ENCODE measurements at regions of chr5 and their contacts with region 1.

Region 1: DNA sequence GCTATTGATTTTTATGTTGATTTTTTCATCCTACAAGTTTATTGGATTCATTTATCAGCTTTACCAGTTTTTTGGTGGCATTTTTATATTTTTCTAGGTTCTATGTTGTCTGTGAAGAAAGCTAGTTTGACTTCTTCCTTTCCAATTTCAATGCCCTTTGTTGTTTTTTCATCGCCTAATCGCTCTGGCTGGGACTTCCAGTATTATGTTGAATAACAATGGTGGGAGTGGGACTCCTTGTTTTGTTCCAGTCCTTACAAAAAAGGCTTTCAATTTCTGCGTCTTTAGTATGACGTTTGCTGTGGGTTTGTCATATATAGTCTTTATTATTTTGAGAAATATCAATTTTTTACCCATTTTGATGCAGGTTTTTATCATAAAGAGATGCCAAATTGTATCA is 175.6 kb upstream of the CCNH start:
- DNase-seq: no peak
- H3K4me3 ChIP-seq: no peak overlapping the region
- H3K27ac ChIP-seq: no peak overlapping the region
- H3K4me1 ChIP-seq: no peaks in the 10 kb centered on the region
- H3K27me3 ChIP-seq: no peaks in the 10 kb centered on the region
- CTCF ChIP-seq: no peak

Region 2: DNA sequence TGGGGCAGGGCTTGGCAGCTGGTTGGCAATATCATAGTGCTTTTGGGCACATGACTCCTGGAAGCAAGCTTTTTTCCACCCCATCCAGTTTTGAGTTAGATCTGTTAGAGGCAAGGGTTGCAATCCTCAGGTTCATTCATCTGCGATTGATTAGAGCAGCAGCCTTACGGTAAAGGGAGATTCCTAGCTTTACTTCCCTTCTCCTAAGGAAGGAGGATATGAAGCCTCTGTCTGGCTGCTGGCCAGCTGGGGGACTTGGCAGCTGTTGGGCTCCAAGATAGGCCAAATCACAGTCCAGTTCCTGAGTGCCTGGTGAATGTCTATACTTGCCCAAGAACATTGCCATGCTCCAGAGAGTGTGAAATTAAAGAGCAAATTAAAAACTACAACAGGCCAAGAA is 62.2 kb before region 1 on chr5:
- CTCF ChIA-PET with region 1: no interaction called
- POLR2A ChIA-PET with region 1: no interaction called
- intact Hi-C with region 1: loop called (anchors 2 kb)
- DNase-seq: peak in 1 of 2 experiments; percentile 17
- H3K4me3 ChIP-seq: no peak overlapping the region
- H3K27ac ChIP-seq: no peak overlapping the region
- H3K4me1 ChIP-seq: no peaks in the 10 kb centered on the region
- H3K27me3 ChIP-seq: no peaks in the 10 kb centered on the region
- CTCF ChIP-seq: no peak

Region 3: GRCh38 chr5:87608385-87608784 is 20.1 kb after region 1 on chr5:
- CTCF ChIA-PET with region 1: no interaction called
- POLR2A ChIA-PET with region 1: no interaction called
- intact Hi-C with region 1: no loop called
- DNase-seq: no peak
- H3K4me3 ChIP-seq: no peak overlapping the region
- H3K27ac ChIP-seq: no peak overlapping the region
- H3K4me1 ChIP-seq: no peaks in the 10 kb centered on the region
- H3K27me3 ChIP-seq: no peaks in the 10 kb centered on the region
- CTCF ChIP-seq: no peak